Sigmoid colon (tissue), 7 donors: ENCODE measurements at regions of chr15 and their contacts with region 1.

Region 1: DNA sequence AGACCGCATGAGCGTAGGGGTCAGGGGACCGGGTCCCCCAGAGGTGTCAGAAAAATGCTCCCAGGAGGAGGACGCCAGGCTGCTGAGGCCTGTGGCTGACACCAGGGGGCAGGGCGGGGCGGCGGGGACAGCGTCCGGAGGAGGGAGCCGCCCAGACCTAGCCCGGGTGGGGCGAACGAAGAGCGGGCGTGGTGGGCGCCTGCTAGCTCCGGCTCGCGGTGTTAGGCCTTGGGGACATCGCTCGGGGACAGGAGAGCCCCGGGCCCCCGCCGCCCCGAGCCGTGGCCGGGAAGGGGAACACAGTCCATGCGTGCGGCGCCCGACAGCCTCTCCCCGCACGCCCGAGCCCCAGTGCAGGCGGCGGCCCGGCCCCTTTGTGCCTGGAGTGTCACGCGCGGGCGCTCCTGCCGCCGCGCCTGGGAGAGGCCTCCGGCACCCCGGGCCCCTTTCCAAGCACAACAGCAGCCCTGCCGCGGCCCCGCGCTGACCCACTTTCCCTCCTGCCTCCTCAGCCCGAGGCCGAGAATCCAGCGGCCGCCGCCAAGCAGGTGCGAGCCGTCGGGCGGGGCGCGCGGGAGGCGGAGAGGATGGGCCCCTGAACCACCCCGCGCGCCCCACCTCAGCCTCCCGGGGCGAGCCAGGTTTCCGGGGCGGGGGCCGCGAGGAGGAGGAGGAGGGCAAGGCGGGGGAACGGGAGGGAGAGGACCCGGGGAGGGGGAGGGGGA is 111.0 kb upstream of the KLF13 start:
- DNase-seq: peak; percentile 92
- H3K4me3 ChIP-seq: peak overlapping the region; percentile 47 to 70 (median 64)
- H3K27ac ChIP-seq: peak overlapping the region; percentile 84 to 98 (median 93)
- H3K4me1 ChIP-seq: peaks cover 0 to 28% (median 22%) of the 10 kb centered on the region in 4 donors
- H3K27me3 ChIP-seq: no peaks in the 10 kb centered on the region
- CTCF ChIP-seq: peak; percentile 85 to 93 (median 92)
- EP300 ChIP-seq: no peak
- POLR2A ChIP-seq: no peak

Region 2: DNA sequence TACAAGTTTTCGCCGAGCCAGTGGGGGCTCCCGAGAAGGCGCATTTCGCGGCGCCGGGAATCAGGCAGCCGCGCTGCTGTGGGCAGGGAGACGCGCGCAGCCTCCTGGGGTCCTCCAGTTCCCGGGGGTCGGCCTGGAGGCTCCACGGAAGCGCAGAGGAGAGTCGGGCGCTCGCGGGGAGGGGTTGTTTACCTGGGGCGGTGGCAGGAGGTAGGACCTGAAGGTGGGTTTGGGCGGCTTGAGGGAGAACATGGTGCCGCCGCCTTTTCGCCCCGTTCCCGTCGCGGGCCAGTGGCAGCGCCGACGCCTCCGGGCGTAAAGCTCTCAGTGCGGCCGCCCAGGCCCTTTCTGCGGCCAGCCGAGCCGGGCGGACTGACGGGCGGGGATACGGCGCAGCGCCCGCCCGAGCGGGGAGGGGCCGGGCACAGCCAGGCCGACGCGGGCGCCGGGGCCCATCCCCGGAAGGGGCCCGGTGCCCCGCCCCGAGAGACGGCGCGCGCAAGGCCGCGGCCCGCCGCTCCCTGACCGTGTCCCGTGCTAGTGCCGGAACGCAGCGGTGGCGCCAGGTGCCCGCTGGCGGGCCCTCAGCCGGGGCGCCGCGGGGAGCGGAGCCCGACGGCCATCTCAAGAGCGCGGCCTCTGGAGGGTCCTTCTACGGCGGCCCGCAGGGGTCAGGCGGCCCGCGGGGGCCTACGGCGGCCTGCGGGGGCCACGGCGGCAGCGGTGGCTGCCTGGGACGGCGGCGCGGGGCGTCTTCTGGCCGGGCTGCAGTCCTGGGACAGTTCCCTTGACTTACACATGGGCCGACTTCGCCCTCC is 224.2 kb before region 1 on chr15 and contains the start of gene MTMR10:
- intact Hi-C with region 1: loop called (anchors 5 kb)
- DNase-seq: peak; percentile 79
- H3K4me3 ChIP-seq: peak within 1 kb of the TSS; percentile 78 to 97 (median 93)
- H3K27ac ChIP-seq: peak within 1 kb of the TSS; percentile 92 to 96 (median 94)
- H3K4me1 ChIP-seq: peaks cover 0 to 40% (median 30%) of the 10 kb centered on the region in 4 donors
- H3K27me3 ChIP-seq: no peaks in the 10 kb centered on the region
- CTCF ChIP-seq: no peak
- EP300 ChIP-seq: no peak
- POLR2A ChIP-seq: peak; percentile 17 to 60
- total RNA-seq, gene MTMR10: 24.3 to 31.0 (median 27.9) TPM

Region 3: GRCh38 chr15:31111091-31111647 is 104.5 kb before region 1 on chr15:
- intact Hi-C with region 1: no loop called
- DNase-seq: no peak
- H3K4me3 ChIP-seq: no peak overlapping the region
- H3K27ac ChIP-seq: no peak overlapping the region
- H3K4me1 ChIP-seq: no peaks in the 10 kb centered on the region
- H3K27me3 ChIP-seq: no peaks in the 10 kb centered on the region
- CTCF ChIP-seq: no peak
- EP300 ChIP-seq: no peak
- POLR2A ChIP-seq: no peak

Region 4: GRCh38 chr15:31228985-31229826 is 13.6 kb after region 1 on chr15:
- intact Hi-C with region 1: no loop called
- DNase-seq: no peak
- H3K4me3 ChIP-seq: no peak overlapping the region
- H3K27ac ChIP-seq: no peak overlapping the region
- H3K4me1 ChIP-seq: peaks cover 0 to 6% (median under 1%) of the 10 kb centered on the region in 4 donors
- H3K27me3 ChIP-seq: no peaks in the 10 kb centered on the region
- CTCF ChIP-seq: no peak
- EP300 ChIP-seq: no peak
- POLR2A ChIP-seq: peak in 1 of 2 donors; percentile 53

Region 5: GRCh38 chr15:31254431-31255175 is 39.0 kb after region 1 on chr15:
- intact Hi-C with region 1: loop called (anchors 5 kb)
- DNase-seq: no peak
- H3K4me3 ChIP-seq: no peak overlapping the region
- H3K27ac ChIP-seq: peak overlapping the region in 2 of 4 donors; percentile 43 to 55
- H3K4me1 ChIP-seq: peaks cover 0 to 12% (median 11%) of the 10 kb centered on the region in 4 donors
- H3K27me3 ChIP-seq: no peaks in the 10 kb centered on the region
- CTCF ChIP-seq: peak in 1 of 4 experiments; percentile 22
- EP300 ChIP-seq: peak in 1 of 4 donors; percentile 39
- POLR2A ChIP-seq: no peak

Region 6: DNA sequence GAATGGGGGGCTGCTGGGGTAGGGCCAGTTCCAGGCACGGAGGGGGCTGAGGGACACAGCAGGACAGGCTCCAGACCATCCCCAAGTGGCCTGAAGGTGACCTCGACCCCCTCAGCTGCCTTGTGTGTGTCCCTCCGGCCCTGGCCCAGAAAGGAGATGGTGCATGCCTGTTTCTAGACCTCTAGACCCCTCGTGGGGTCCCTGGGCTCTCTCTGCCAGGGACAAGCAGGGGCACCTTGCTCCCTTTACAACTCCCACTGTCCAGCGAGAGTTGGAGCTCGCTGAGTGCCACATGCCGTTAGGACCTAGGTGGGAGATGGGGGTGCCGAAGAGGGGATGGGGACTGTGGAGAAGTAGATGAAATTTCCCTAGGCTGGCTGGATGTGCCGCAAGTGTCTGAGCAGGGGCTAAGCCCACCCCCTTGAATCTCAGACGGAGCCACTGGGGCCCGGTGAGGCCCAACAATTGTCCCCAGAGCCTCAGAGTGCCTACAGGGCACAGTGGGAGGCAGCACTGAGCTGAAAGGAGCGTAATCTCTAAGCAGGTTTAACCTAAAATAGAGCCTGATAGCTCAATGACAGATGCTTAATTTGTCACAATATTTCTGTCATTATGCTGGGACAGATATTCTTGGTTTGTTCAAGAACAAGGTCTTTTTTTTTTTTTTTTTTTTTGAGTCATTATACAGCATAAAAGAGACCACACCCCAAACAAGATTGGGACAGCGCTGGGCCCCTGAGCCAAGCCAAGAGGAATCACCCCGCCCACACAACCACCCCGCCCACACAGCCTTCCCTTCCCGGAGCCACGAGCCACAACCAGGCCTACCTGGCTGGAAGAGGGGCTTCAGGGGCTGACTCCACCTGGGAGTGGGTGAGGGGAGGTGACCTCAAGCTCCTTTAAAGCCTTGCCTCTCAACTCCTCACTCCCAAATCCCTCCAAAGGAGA is 87.4 kb after region 1 on chr15:
- intact Hi-C with region 1: no loop called
- DNase-seq: peak; percentile 72
- H3K4me3 ChIP-seq: no peak overlapping the region
- H3K27ac ChIP-seq: no peak overlapping the region
- H3K4me1 ChIP-seq: no peaks in the 10 kb centered on the region
- H3K27me3 ChIP-seq: no peaks in the 10 kb centered on the region
- CTCF ChIP-seq: no peak
- EP300 ChIP-seq: no peak
- POLR2A ChIP-seq: no peak

Region 7: DNA sequence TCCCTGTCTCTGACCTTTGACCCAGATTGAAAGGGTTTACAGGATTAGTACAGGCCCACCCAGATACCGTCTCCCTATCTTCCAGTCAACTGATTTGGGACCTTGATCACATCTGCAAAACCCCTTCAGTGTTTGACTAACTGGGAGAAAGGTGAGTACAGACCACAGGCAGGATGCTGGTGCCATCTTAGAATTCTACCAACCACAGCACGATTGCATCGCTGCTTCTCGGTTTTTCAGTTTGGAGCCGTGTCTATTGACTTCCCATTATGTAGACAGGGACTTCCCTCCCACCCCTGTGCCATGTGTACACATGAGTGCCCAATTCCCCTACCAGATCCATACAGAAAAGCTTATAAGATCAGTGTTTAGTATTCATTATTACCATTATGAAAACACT is 104.4 kb after region 1 on chr15:
- intact Hi-C with region 1: no loop called
- DNase-seq: no peak
- H3K4me3 ChIP-seq: no peak overlapping the region
- H3K27ac ChIP-seq: no peak overlapping the region
- H3K4me1 ChIP-seq: peaks cover 0 to 5% (median 2%) of the 10 kb centered on the region in 4 donors
- H3K27me3 ChIP-seq: peaks cover 0 to 8% (median 0%) of the 10 kb centered on the region in 3 donors
- CTCF ChIP-seq: no peak
- EP300 ChIP-seq: no peak
- POLR2A ChIP-seq: no peak

Region 8: DNA sequence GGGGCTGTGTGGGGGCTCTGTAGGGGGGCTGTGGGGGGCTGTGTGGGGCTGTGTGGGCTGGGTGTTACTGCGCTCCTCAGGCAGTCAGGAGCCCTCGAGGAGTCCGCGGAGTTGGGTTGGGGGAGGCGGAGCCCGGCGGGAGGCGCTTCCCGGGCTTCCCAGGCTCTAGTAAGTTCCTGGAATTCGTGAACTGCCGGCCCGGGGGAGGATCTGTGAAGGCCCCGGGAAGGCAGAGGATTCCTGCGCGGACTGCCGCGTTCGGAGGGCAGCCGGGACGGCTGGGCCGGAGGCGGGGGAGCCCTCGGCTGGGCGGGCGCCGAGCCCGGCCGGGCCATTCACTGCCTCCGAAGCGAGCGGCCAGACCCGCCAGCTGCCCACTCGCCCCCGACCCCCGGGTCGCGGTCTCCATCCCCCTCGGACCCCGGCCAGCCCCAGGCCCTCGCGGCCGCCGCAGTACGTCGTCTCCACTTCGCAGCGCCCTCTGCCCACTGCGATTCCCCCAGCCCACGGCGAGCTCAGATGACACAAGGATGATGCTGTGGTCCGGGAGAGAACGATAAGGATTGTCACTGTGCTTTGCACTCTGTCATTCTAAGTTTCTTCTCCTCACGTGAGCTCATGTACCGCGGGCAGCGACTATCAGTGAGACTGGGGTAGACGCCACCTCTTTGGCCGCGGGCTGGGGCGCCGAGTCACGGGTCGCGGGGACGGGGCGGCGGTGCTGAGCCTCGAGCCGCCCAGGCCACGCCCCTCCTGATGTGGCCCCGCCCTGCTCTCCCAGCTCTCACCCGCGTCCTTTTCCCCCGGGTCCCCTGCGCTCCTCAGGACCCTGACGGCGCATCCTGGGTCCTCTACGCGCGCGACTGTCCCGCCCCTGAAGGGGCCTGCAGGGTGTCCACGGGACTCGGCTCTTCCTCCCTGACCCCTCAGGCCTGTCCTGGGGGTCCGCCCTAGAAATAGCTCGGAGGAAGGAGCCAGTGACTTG is 176.3 kb after region 1 on chr15:
- intact Hi-C with region 1: loop called (anchors 2 kb)
- DNase-seq: peak; percentile 94
- H3K4me3 ChIP-seq: peak overlapping the region; percentile 37 to 83 (median 56)
- H3K27ac ChIP-seq: peak overlapping the region; percentile 78 to 94 (median 88)
- H3K4me1 ChIP-seq: peaks cover 0 to 39% (median 31%) of the 10 kb centered on the region in 4 donors
- H3K27me3 ChIP-seq: no peaks in the 10 kb centered on the region
- CTCF ChIP-seq: no peak
- EP300 ChIP-seq: peak in 1 of 4 donors; percentile 28
- POLR2A ChIP-seq: peak; percentile 84 to 85

Region 9: GRCh38 chr15:31488426-31489204 is 273.0 kb after region 1 on chr15:
- intact Hi-C with region 1: loop called (anchors 1 kb)
- DNase-seq: peak; percentile 87
- H3K4me3 ChIP-seq: no peak overlapping the region
- H3K27ac ChIP-seq: peak overlapping the region in 3 of 4 donors; percentile 26 to 60 (median 45)
- H3K4me1 ChIP-seq: peaks cover 0 to 20% (median 16%) of the 10 kb centered on the region in 4 donors
- H3K27me3 ChIP-seq: peaks cover 0 to 18% (median 5%) of the 10 kb centered on the region in 3 donors
- CTCF ChIP-seq: peak; percentile 77 to 95 (median 84)
- EP300 ChIP-seq: no peak
- POLR2A ChIP-seq: no peak